ENCODE measurements at regions of chr13 and their contacts with region 1.

Region 1: GRCh38 chr13:33228648-33229445 is 56.7 kb downstream of the STARD13 start:
- DNase-seq: peak in 8 of 42 donors; percentile 30 to 69 (median 48)

Region 2: DNA sequence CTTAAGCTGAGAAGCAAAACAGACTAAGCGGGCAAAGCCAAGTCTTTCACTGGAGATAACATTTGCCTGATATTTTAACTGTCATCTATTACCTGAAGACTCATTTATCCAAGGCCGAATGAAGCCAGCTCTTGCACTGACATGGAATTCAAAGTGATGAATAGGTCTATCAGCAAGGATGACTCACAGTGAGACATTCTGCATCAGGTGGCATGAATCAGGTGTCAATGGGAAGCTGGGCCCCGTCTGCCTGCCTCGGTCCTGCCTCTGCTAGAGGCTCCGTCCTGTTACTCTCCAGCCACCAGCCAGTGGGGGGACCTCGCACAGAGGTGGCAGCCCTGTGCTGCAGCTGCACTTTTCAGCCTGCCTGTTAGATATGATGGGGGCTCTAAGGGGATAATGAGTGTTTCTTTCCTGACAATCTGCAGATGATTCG is 33.2 kb after region 1 on chr13:
- intact Hi-C with region 1: loop called (anchors 5 kb)
- DNase-seq: peak in 36 of 42 donors; percentile 21 to 81 (median 42)

Region 3: GRCh38 chr13:33312150-33312860 is 83.5 kb after region 1 on chr13:
- intact Hi-C with region 1: loop called (anchors 5 kb)
- DNase-seq: peak in 10 of 42 donors; percentile 7 to 67 (median 30)

Region 4: GRCh38 chr13:33723772-33724435 is 495.1 kb after region 1 on chr13:
- intact Hi-C with region 1: loop called (anchors 10 kb)
- DNase-seq: peak; percentile 44 to 95 (median 82)